OCI-LY7 (cell line): ENCODE measurements at regions of chr12 and their contacts with region 1.

Region 1: DNA sequence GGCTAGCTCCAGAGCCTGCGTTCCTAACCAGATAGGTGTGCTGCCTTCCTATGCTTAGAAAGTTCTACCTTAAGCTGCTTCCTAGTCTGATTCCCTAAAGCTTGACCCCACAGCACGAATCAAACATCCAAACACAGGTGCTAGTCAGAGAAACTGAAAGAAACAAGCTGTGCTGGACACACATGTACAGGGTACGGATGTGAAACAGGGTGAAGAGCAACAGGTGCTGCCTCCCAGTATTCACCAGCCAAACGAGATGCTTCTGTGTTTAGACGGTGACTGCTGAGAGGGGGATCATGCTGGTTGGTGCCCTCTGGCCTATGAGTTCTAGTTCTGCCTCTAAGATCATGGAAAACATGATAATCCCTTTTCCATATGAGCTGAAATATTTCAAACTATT is 105.3 kb downstream of the GRIP1 start:
- DNase-seq: peak; percentile 89
- H3K4me3 ChIP-seq: peak overlapping the region; percentile 22
- H3K27ac ChIP-seq: peak overlapping the region; percentile 71
- H3K4me1 ChIP-seq: peaks cover 56% of the 10 kb centered on the region
- CTCF ChIP-seq: no peak

Region 2: DNA sequence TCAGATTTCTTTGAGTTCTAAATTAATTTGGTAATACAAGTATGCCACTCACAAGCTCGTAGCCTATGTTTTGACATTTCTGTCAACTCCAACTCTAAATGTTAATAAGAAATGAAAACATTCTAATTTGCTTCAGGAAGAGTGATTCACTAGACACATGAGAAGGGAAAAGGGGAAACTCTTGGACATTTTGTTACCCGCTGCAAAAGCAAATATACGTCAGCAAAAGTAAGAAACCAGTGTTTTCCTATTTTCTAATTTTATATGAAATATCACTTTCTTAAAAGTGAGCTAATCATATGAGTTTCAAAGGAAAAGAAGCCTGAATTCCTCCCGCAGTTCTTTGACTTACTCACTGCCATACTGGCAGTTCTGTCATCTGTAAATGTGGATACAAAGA is 57.0 kb before region 1 on chr12:
- CTCF ChIA-PET with region 1: no interaction called
- POLR2A ChIA-PET with region 1: no interaction called
- intact Hi-C with region 1: no loop called
- DNase-seq: no peak
- H3K4me3 ChIP-seq: no peak overlapping the region
- H3K27ac ChIP-seq: no peak overlapping the region
- H3K4me1 ChIP-seq: peaks cover 6% of the 10 kb centered on the region
- CTCF ChIP-seq: no peak

Region 3: GRCh38 chr12:66587912-66588311 is 14.3 kb after region 1 on chr12:
- CTCF ChIA-PET with region 1: no interaction called
- POLR2A ChIA-PET with region 1: interaction called, 12 read pairs
- intact Hi-C with region 1: no loop called
- DNase-seq: no peak
- H3K4me3 ChIP-seq: no peak overlapping the region
- H3K27ac ChIP-seq: no peak overlapping the region
- H3K4me1 ChIP-seq: peaks cover 52% of the 10 kb centered on the region
- CTCF ChIP-seq: no peak

Region 4: DNA sequence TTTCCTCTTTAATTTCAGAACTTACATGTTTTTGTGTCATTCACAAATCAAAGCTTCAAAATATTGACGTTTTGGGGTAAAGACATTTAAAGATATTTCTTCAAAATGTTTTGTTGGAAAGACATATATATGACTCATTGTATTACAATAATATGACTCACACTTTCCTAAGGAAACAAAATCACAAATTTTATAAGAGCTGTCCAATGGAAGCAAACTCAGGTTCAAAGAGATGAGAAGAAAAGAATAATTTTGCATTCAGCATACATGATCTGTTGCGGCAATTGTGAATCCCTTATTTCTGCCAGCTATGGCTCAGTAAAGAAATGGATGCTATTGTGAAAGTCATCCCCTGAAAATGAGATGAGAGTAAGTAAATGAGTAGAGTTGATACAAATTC is 22.6 kb after region 1 on chr12:
- CTCF ChIA-PET with region 1: interaction called, 5 read pairs
- POLR2A ChIA-PET with region 1: interaction called, 15 read pairs
- intact Hi-C with region 1: no loop called
- DNase-seq: no peak
- H3K4me3 ChIP-seq: no peak overlapping the region
- H3K27ac ChIP-seq: no peak overlapping the region
- H3K4me1 ChIP-seq: peaks cover 45% of the 10 kb centered on the region
- CTCF ChIP-seq: no peak

Region 5: DNA sequence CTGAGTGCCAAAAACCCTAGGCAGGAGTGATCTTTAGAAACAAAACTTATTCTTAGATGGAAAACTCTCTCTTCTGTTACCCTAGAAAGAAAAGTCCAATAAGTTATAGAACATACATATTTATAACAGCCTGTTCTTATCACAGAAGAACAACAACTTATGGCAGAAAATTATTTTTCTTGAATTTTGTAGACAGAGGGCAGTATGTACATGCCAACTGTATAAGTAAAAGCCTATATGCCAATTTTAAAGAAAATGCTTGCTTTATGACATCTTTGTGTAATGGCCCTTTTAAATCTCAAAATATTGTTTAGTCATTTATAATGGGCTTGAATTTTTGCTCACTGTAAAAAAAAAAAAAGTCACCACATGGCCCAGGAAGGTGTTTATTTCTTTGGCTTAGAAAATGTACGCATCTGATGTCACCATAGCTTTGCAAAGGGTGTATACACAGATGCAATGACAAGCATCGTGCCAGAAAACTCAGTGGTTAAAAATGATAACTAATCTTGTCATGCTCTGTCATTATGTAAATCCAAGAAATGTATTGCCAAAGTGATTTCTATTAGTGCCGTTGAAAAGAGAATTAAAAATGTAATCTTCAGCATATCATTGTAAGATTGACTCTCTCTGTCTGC is 143.6 kb after region 1 on chr12:
- CTCF ChIA-PET with region 1: no interaction called
- POLR2A ChIA-PET with region 1: no interaction called
- intact Hi-C with region 1: no loop called
- DNase-seq: no peak
- H3K4me3 ChIP-seq: no peak overlapping the region
- H3K27ac ChIP-seq: no peak overlapping the region
- H3K4me1 ChIP-seq: peaks cover 5% of the 10 kb centered on the region
- CTCF ChIP-seq: peak; percentile 76

Region 6: GRCh38 chr12:68236421-68237059 is 1662.9 kb after region 1 on chr12:
- CTCF ChIA-PET with region 1: no interaction called
- POLR2A ChIA-PET with region 1: no interaction called
- intact Hi-C with region 1: no loop called
- DNase-seq: peak; percentile 50
- H3K4me3 ChIP-seq: peak overlapping the region; percentile 57
- H3K27ac ChIP-seq: no peak overlapping the region
- H3K4me1 ChIP-seq: peaks cover 30% of the 10 kb centered on the region
- CTCF ChIP-seq: no peak